BJ (cell line): ENCODE measurements at regions of chr9 and their contacts with region 1.

Region 1: DNA sequence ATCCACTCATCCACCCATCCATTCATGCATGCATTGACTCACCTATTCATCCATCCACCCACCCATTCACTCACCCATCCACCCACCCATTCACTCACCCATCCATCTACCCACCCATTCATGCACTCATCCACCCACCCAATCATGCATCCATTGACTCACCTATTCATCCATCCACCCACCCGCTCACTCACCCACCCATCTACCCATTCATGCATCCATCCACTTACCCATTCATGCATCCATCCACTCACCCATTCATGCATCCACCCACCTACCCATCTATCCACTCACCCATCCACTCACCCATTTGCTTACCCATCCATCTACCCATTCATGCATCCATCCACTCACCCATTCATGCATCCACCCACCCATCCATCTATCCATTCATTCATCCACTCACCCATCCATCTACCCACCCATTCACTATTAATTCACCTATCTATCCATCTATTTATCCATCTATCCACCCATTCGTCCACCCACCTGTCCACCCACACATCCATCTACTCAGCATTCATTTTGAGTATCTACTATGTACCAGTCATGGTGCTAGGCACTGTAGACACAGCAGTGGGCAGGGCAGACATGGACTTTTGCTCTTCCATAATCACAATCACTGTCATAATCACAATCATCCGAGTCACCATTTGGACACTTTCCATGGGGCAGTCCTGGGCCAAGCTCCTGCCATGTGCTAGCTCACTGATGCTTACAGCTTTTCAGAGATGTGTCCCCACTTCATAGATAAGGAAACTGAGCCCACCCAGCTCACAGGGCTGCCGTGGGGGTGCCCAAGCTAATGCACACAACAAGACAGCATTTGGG is 34.4 kb downstream of the HMCN2 start:
- DNase-seq: no peak
- H3K4me3 ChIP-seq: no peak overlapping the region
- H3K27me3 ChIP-seq: peaks cover 11% of the 10 kb centered on the region
- CTCF ChIP-seq: no peak

Region 2: DNA sequence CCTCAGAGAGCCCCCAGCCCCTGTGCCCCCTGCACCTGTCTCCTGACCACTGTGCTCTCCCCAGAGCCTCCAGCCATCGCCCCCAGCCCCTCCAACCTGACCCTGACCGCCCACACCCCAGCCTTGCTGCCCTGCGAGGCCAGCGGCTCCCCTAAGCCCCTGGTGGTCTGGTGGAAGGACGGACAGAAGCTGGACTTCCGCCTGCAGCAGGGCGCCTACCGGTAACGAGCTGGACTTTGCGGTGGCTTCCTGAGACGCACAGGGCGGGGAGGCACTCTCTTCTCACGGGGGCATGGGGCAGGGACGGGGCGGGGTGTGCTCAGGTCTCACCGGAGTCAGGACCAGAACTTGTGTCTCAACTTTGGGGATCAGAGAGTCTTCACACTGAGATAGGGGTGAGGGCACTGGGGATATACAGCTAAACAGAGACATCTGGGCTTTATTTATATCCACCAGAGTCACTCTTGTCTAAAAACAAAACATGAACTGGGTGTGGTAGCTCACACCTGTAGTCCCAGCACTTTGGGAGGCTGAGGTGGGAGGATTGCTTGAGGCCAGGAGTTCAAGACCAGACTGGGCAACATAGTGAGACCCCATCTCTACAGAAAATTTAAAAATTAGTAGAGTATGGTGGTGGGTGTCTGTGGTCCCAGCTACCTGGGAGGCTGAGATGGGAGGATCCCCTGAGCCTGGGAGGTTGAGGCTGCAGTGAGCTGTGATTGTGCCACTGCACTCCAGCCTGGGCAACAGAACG is 98.7 kb after region 1 on chr9:
- CTCF ChIA-PET with region 1: no interaction called
- POLR2A ChIA-PET with region 1: interaction called, 19 read pairs
- DNase-seq: no peak
- H3K4me3 ChIP-seq: no peak overlapping the region
- H3K27me3 ChIP-seq: peaks cover 2% of the 10 kb centered on the region; the same call in 1 of the 2 replicates
- CTCF ChIP-seq: no peak